Activated CD4-positive, alpha-beta memory T cell treated with anti-CD3 and anti-CD28 coated beads, Interleukin-2, amount 10 ng/mL, durations not matched to agents 7 days and 5 days (primary cell): ENCODE measurements at regions of chr7 and their contacts with region 1.

Region 1: GRCh38 chr7:35714862-35715261 is 19.9 kb upstream of the HERPUD2 start:
- DNase-seq: no peak
- H3K4me3 Mint-ChIP-seq: no peak overlapping the region
- H3K27ac Mint-ChIP-seq: no peak overlapping the region
- H3K4me1 Mint-ChIP-seq: peaks cover 11% of the 10 kb centered on the region
- H3K27me3 Mint-ChIP-seq: peaks cover 7% of the 10 kb centered on the region

Region 2: DNA sequence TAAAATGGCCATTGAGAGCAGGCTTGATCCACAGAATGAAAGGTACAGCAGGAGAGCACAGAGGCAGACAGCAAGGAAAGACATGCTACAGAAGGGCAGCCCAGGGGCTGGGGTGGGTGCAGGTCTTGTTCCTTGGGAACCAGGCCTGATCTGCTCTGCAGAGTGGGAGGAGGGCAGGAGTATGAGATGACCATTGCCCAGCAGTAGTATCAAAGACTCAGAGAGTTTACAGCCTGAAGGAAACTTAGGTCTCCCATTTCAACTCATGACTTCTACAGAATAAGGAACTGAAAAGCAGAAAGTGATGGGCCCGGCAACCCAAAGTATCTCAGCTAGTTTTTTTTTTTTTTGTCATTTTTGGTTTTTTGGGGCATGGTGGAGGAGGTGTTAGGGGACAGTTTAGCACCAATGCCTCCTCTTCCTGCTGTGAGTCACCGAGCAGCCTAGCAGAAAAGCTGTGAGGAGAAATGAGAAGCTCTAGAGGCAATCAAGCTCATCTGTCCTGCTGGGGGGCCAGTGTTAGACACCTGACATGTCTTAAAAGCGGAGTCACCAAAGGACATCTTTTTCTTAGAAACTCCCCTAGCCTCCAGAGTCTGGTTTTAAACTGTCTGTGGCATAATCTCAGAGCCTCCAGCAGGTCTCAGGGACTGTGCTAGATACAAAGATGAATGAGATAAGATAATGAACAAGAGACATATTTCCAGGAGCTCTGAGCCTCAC is 14.4 kb after region 1 on chr7:
- CTCF ChIA-PET with region 1: interaction called, 86 read pairs
- POLR2A ChIA-PET with region 1: interaction called, 13 read pairs
- DNase-seq: peak; percentile 61
- H3K4me3 Mint-ChIP-seq: peak overlapping the region; percentile 1
- H3K27ac Mint-ChIP-seq: peak overlapping the region; percentile 69
- H3K4me1 Mint-ChIP-seq: peaks cover 61% of the 10 kb centered on the region
- H3K27me3 Mint-ChIP-seq: peaks cover 4% of the 10 kb centered on the region

Region 3: GRCh38 chr7:35906191-35906908 is 191.5 kb after region 1 on chr7:
- CTCF ChIA-PET with region 1: interaction called, 12 read pairs
- POLR2A ChIA-PET with region 1: no interaction called
- DNase-seq: peak; percentile 72
- H3K4me3 Mint-ChIP-seq: no peak overlapping the region
- H3K27ac Mint-ChIP-seq: no peak overlapping the region
- H3K4me1 Mint-ChIP-seq: peaks cover 2% of the 10 kb centered on the region
- H3K27me3 Mint-ChIP-seq: no peaks in the 10 kb centered on the region